SK-N-SH (cell line): ENCODE measurements at regions of chr6 and their contacts with region 1.

Region 1: DNA sequence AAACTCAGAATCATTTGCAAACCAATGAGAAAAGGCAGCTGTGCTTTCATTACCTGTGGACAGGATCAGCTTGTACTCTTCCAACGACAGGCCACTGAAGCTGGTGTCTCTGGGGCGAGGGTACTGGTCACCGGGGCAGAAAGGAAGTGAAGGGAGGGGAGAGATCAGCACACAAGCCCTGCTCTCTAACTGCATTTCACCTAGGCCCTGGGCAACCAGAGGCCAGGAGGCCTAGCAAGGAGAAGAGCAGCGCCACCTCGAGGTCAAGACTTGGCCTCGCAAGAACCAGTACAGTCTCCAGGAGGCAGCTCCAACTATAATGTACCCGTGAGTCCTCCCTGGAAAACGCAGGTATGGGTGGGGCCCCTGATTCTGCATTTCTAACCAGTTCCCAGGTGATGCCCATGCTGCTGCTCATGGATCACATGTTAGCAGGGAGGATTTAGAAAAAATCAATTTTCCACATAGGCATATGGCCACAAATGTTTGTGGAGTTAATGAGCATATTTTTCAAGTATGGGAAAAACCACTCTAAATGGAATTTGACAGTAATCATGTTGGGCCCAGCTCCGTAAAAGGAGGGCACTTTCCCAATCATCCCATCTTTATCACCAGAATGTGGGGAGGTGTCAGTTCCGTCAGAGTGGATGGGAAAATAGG is 11.0 kb downstream of the UQCC2 start:
- DNase-seq: peak; percentile 62
- H3K4me3 ChIP-seq: no peak overlapping the region; a peak in 1 of 4 replicates
- H3K27ac ChIP-seq: no peak overlapping the region; a peak in 1 of 4 replicates
- H3K4me1 ChIP-seq: peaks cover 20 to 34% of the 10 kb centered on the region in 2 experiments; a peak in 3 of 4 replicates
- H3K27me3 ChIP-seq: no peaks in the 10 kb centered on the region
- CTCF ChIP-seq: peak; percentile 76
- EP300 ChIP-seq: no peak
- RAD21 ChIP-seq: peak; percentile 78

Region 2: GRCh38 chr6:33599413-33599911 is 101.1 kb before region 1 on chr6:
- CTCF ChIA-PET with region 1: interaction called, 17 read pairs
- POLR2A ChIA-PET with region 1: no interaction called
- DNase-seq: no peak
- H3K4me3 ChIP-seq: no peak overlapping the region
- H3K27ac ChIP-seq: no peak overlapping the region
- H3K4me1 ChIP-seq: peaks cover 0 to 10% of the 10 kb centered on the region in 2 experiments; a peak in 1 of 4 replicates
- H3K27me3 ChIP-seq: no peaks in the 10 kb centered on the region
- CTCF ChIP-seq: no peak
- EP300 ChIP-seq: no peak
- RAD21 ChIP-seq: no peak

Region 3: DNA sequence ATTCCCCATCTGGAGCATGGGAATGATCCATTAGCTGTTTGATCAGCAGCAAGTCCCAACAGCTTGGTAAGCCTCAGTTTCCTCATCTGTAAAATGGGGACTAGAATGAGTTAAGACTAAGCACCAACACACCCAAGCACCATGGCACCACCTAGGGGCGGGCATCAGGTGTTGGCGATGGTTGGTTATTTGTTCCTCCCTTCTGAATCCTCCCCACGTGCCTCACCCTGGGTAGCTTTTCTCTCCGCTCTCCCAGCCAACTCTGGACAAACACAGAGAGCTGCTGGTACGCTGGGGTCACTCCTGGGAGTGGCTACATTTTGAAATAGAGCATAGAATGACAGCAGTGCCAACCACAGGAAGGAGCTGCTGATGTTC is 92.7 kb before region 1 on chr6:
- CTCF ChIA-PET with region 1: interaction called, 31 read pairs
- POLR2A ChIA-PET with region 1: interaction called, 3 read pairs
- DNase-seq: peak; percentile 43
- H3K4me3 ChIP-seq: no peak overlapping the region
- H3K27ac ChIP-seq: peak overlapping the region in 1 of 2 experiments; percentile 77; a peak in 1 of 4 replicates
- H3K4me1 ChIP-seq: peaks cover 9 to 50% of the 10 kb centered on the region in 2 experiments; a peak in 2 of 4 replicates
- H3K27me3 ChIP-seq: no peaks in the 10 kb centered on the region
- CTCF ChIP-seq: no peak; the same call in 1 of the 2 replicates
- EP300 ChIP-seq: no peak
- RAD21 ChIP-seq: peak; percentile 26

Region 4: GRCh38 chr6:33620856-33621710 is 79.4 kb before region 1 on chr6 and contains the start of gene ITPR3:
- CTCF ChIA-PET with region 1: interaction called, 17 read pairs
- POLR2A ChIA-PET with region 1: no interaction called
- DNase-seq: peak; percentile 86
- H3K4me3 ChIP-seq: peak within 1 kb of the TSS; percentile 57 to 76
- H3K27ac ChIP-seq: peak within 1 kb of the TSS in 1 of 2 experiments; percentile 45; a peak in 3 of 4 replicates
- H3K4me1 ChIP-seq: peaks cover 0 to 19% of the 10 kb centered on the region in 2 experiments; a peak in 1 of 4 replicates
- H3K27me3 ChIP-seq: no peaks in the 10 kb centered on the region
- CTCF ChIP-seq: no peak
- EP300 ChIP-seq: no peak
- RAD21 ChIP-seq: no peak
- polyA plus RNA-seq, gene ITPR3: 4.7 and 8.1 TPM in 2 replicates

Region 5: DNA sequence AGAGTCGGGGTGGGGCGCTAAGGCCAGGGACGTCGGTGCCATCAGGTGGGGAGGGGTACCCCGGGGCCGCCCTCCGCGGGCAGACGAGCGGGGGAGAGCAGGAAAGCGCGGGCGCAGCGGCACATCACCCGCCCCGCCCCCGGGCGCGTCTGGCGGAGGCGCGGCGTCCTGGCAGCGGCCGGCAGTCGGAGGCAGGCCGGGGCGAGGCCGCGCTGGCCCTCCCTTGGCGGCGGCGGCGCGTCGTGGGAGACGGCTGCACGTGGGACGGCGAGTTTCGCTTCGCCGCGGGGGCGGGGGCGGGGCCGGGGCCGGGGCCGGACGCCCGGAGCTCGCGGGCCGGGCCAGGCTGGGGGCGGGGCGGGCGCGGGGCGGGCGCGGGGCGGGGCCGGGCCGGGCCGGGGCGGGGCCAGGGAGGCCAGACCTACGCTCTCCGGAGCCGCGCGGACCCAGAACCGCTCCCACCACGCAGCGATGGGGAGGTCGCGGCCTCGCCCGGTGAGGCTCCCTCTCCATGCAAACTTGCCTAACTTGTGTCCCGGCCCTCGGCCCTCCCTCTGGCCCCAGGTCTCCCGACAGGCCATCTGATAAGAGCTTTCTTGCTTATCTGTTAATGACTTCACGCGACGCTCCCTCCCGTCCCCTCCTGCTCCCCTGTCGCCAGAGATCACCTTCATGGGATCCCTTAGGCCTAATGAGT is 66.9 kb before region 1 on chr6:
- CTCF ChIA-PET with region 1: interaction called, 10 read pairs
- POLR2A ChIA-PET with region 1: interaction called, 3 read pairs
- DNase-seq: peak; percentile 90
- H3K4me3 ChIP-seq: peak overlapping the region; percentile 58 to 66
- H3K27ac ChIP-seq: peak overlapping the region in 1 of 2 experiments; percentile 61; a peak in 1 of 4 replicates
- H3K4me1 ChIP-seq: peaks cover 0 to 28% of the 10 kb centered on the region in 2 experiments; a peak in 1 of 4 replicates
- H3K27me3 ChIP-seq: no peaks in the 10 kb centered on the region
- CTCF ChIP-seq: no peak
- EP300 ChIP-seq: no peak
- RAD21 ChIP-seq: no peak

Region 6: DNA sequence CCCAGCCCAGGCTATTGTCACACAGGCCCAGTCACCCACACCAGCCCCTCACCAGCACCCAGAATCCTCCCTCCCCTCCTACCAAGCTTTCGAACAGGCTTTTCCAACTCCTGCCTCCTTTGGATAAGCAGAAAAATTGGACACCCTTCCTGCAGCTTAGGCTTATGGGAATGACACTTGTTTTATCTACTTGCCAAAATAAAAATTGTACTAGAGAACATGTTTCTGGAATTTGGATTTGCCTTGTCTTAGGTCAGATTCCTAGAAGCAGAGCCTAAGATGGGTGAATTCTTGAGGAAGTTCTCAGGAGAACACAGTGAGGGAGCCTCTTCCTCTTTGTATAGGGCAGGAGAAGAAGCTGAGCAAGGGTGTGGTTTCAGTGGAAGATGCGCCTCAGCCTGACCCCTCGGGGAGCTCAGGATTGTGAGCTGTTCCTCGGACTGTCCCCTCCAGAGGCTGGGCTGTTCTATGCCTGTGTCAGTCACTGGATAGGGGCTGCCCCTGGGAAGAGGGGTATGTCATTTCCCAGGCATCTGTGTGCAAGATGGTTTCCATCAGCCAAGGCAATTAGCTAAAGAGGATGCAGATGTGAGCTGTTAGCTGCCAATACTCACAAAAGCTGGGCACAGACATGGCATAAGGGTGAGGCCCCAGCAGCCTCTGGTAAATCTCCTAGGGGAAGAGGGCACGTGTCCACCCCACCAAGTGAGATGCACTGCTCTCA is 45.5 kb before region 1 on chr6:
- CTCF ChIA-PET with region 1: interaction called, 11 read pairs
- POLR2A ChIA-PET with region 1: no interaction called
- DNase-seq: peak; percentile 91
- H3K4me3 ChIP-seq: no peak overlapping the region
- H3K27ac ChIP-seq: peak overlapping the region in 1 of 2 experiments; percentile 64; a peak in 2 of 4 replicates
- H3K4me1 ChIP-seq: peaks cover 0 to 13% of the 10 kb centered on the region in 2 experiments; a peak in 1 of 4 replicates
- H3K27me3 ChIP-seq: no peaks in the 10 kb centered on the region
- CTCF ChIP-seq: no peak
- EP300 ChIP-seq: peak in 1 of 2 experiments; percentile 14; a peak in 1 of 4 replicates
- RAD21 ChIP-seq: no peak

Region 7: GRCh38 chr6:33668927-33669326 is 31.6 kb before region 1 on chr6:
- CTCF ChIA-PET with region 1: interaction called, 16 read pairs
- POLR2A ChIA-PET with region 1: no interaction called
- DNase-seq: no peak
- H3K4me3 ChIP-seq: no peak overlapping the region
- H3K27ac ChIP-seq: no peak overlapping the region
- H3K4me1 ChIP-seq: peaks cover 0 to 4% of the 10 kb centered on the region in 2 experiments; a peak in 3 of 4 replicates
- H3K27me3 ChIP-seq: no peaks in the 10 kb centered on the region
- CTCF ChIP-seq: no peak
- EP300 ChIP-seq: no peak
- RAD21 ChIP-seq: no peak

Region 8: GRCh38 chr6:33802186-33803064 is 101.9 kb after region 1 on chr6:
- CTCF ChIA-PET with region 1: no interaction called
- POLR2A ChIA-PET with region 1: no interaction called
- DNase-seq: no peak
- H3K4me3 ChIP-seq: no peak overlapping the region
- H3K27ac ChIP-seq: no peak overlapping the region
- H3K4me1 ChIP-seq: peaks cover 0 to 23% of the 10 kb centered on the region in 2 experiments; a peak in 1 of 4 replicates
- H3K27me3 ChIP-seq: peaks cover 3% of the 10 kb centered on the region; the same call in 1 of the 2 replicates
- CTCF ChIP-seq: no peak
- EP300 ChIP-seq: no peak
- RAD21 ChIP-seq: no peak